A673 (cell line): ENCODE measurements at regions of chr9 and their contacts with region 1.

Region 1: GRCh38 chr9:72203205-72203803 is 54.1 kb downstream of the GDA start:
- DNase-seq: peak; percentile 67
- H3K4me3 ChIP-seq: no peak overlapping the region
- H3K27ac ChIP-seq: no peak overlapping the region
- H3K4me1 ChIP-seq: no peaks in the 10 kb centered on the region
- H3K27me3 ChIP-seq: no peaks in the 10 kb centered on the region
- CTCF ChIP-seq: peak; percentile 76

Region 2: DNA sequence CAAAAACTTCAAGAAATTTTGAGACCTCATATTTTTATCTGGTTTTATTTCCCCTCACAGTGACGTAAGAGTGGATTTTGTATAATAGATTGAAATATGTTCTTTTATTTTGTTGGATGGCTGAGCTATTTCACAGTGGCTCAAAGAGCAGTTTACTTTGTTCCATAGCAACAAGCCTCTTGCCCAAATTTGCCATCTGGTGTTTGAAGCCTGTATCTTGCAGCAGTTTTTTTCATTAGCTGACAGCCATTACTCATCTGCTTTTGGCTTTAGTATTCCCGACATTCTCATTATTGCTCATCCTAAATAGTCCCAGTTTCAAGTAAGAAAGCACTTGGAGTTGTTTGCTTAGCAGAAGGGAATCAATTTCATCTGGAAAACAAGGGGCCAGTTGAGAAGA is 17.7 kb before region 1 on chr9:
- CTCF ChIA-PET with region 1: no interaction called
- POLR2A ChIA-PET with region 1: no interaction called
- intact Hi-C with region 1: no loop called
- DNase-seq: no peak
- H3K4me3 ChIP-seq: no peak overlapping the region
- H3K27ac ChIP-seq: no peak overlapping the region
- H3K4me1 ChIP-seq: no peaks in the 10 kb centered on the region
- H3K27me3 ChIP-seq: peaks cover 5% of the 10 kb centered on the region
- CTCF ChIP-seq: no peak

Region 3: GRCh38 chr9:72254901-72255535 is 51.7 kb after region 1 on chr9:
- CTCF ChIA-PET with region 1: no interaction called
- POLR2A ChIA-PET with region 1: no interaction called
- intact Hi-C with region 1: loop called (anchors 5 kb)
- DNase-seq: peak; percentile 72
- H3K4me3 ChIP-seq: no peak overlapping the region
- H3K27ac ChIP-seq: no peak overlapping the region
- H3K4me1 ChIP-seq: no peaks in the 10 kb centered on the region
- H3K27me3 ChIP-seq: peaks cover 2% of the 10 kb centered on the region
- CTCF ChIP-seq: peak; percentile 31

Region 4: DNA sequence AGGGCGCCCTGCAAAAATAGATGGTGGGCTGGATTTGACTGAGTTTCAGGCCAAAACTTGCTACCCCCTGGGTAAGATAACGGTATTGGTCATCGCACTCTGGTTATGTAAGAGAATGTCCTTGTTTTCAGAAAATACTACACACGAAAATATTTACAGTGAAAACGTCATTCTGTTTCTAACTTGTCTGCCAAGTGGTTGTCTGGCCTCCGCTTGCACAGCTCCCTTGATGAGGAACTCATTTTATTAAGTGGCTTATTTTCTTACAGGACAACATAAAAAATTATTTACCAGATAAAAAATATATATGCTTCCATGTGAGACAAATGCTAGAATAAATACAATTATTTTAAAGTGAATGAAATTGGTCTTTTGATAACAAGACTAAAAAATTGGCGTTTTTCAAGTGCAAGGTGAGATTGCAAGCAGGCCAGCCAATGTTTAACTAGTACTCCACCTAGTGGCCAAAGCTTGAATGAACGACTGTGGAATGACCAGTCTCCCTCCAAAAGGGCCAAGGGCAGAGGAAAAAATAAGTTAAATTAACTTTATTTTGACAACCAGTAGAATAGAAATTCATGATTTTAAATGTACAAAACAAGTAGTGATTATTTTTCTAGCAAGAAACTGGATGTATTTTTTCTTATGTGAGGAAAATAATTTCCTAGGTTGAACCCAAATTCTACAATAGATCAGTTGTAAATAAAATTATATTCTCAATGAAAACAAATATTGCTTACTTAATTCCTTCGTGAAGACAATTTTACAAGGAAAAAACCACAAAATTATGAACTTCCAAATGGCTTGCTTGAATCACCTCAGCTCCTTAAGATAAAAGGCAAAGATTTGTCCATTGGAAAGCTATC is 68.5 kb after region 1 on chr9:
- CTCF ChIA-PET with region 1: interaction called, 7 read pairs
- POLR2A ChIA-PET with region 1: no interaction called
- intact Hi-C with region 1: loop called (anchors 1 kb)
- DNase-seq: peak; percentile 62
- H3K4me3 ChIP-seq: no peak overlapping the region
- H3K27ac ChIP-seq: no peak overlapping the region
- H3K4me1 ChIP-seq: no peaks in the 10 kb centered on the region
- H3K27me3 ChIP-seq: no peaks in the 10 kb centered on the region
- CTCF ChIP-seq: peak; percentile 85